CD4-positive, alpha-beta memory T cell (primary cell): ENCODE measurements at regions of chr1 and their contacts with region 1.

Region 1: GRCh38 chr1:85200870-85201339 is at the start of gene SYDE2:
- DNase-seq: peak; percentile 84 to 89 (median 86)
- H3K4me3 ChIP-seq: peak within 1 kb of the TSS; percentile 72 to 73
- H3K4me3 Mint-ChIP-seq: peak within 1 kb of the TSS; percentile 96 to 99 (median 98)
- H3K27ac ChIP-seq: peak within 1 kb of the TSS; percentile 82
- H3K27ac Mint-ChIP-seq: peak within 1 kb of the TSS; percentile 97 to 99 (median 98)
- H3K4me1 ChIP-seq: peaks cover 27% of the 10 kb centered on the region
- H3K4me1 Mint-ChIP-seq: peaks cover 18 to 37% (median 27%) of the 10 kb centered on the region in 4 donors
- H3K27me3 ChIP-seq: no peaks in the 10 kb centered on the region
- H3K27me3 Mint-ChIP-seq: peaks cover 2 to 3% of the 10 kb centered on the region in 2 donors
- total RNA-seq, gene SYDE2: 5.0 to 5.2 TPM

Region 2: DNA sequence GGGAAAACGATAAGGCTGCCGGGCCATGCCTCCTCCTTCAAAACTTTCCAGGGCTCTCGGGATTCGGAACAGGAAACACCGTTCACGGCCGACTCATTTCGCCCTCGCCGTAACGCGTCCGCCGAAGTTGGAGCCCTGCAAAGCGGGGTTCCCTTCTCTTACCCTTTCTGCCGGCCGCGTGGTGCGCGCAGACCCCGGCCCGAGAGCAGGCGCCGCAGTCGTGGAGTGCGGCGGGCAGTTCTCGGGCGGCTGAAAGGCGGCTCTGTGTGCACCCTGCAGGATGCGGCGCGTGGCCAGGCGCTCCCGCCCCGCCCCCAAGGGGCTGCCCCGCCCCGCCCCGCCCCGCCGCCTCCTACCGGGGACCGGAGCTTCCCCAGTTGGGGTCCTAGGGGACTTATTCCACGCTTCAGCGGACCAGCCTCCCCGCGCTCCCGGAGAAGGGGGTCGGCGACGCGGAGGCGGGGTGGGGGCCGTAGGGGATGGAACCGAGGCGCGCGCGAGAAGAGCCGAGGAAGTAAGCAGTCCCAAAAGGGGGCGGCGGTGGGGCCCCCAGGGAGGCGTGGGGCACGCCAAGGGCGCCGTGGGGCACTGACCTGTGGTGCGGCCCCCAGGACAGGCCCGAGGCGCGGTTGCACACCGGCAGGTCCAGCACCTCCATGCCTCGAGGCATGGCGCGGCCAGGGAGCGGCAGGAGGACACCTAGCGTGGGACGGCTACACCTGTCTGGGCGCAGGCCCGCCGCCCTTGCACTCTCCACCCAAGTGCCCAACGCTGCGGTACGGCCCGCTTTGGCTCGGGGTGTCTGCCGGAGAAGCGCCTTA is 203.8 kb before region 1 on chr1 and contains the start of gene MCOLN2:
- CTCF ChIA-PET with region 1: no interaction called
- POLR2A ChIA-PET with region 1: interaction called, 3 read pairs
- intact Hi-C with region 1: loop called (anchors 5 kb)
- DNase-seq: peak; percentile 42 to 58 (median 52)
- H3K4me3 ChIP-seq: peak within 1 kb of the TSS; percentile 82 to 86
- H3K4me3 Mint-ChIP-seq: peak within 1 kb of the TSS; percentile 81 to 98 (median 89)
- H3K27ac ChIP-seq: peak within 1 kb of the TSS; percentile 50
- H3K27ac Mint-ChIP-seq: peak within 1 kb of the TSS; percentile 51 to 88 (median 76)
- H3K4me1 ChIP-seq: peaks cover 56% of the 10 kb centered on the region
- H3K4me1 Mint-ChIP-seq: peaks cover 30 to 67% (median 39%) of the 10 kb centered on the region in 4 donors
- H3K27me3 ChIP-seq: peaks cover 4% of the 10 kb centered on the region
- H3K27me3 Mint-ChIP-seq: peaks cover 3 to 17% of the 10 kb centered on the region in 2 donors
- total RNA-seq, gene MCOLN2: 16.8 to 20.3 TPM

Region 3: DNA sequence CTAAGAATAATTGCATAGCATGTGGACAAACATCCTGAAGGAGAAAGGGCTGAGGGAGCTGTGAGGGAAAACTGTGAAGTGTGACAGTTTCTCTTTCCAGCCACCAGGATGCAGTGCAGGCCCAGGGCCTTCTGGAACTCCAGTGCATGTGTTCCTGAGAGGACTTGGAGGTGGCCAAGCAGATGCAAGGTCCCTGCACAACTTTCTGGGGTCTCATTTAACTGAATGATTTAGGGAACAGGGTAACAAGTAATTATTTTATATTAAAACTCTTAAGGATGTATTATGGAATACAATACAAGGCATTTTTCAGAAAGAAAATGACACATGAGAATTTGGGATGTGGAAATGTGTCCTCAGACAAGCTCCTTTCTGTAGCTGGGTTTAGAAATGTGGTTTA is 91.4 kb before region 1 on chr1:
- CTCF ChIA-PET with region 1: interaction called, 4 read pairs
- POLR2A ChIA-PET with region 1: no interaction called
- intact Hi-C with region 1: loop called (anchors 2 kb)
- DNase-seq: peak in 4 of 5 donors; percentile 33 to 44 (median 41)
- H3K4me3 ChIP-seq: no peak overlapping the region
- H3K4me3 Mint-ChIP-seq: no peak overlapping the region
- H3K27ac ChIP-seq: no peak overlapping the region
- H3K27ac Mint-ChIP-seq: peak overlapping the region in 1 of 7 donors; percentile 59
- H3K4me1 ChIP-seq: no peaks in the 10 kb centered on the region
- H3K4me1 Mint-ChIP-seq: no peaks in the 10 kb centered on the region
- H3K27me3 ChIP-seq: no peaks in the 10 kb centered on the region
- H3K27me3 Mint-ChIP-seq: peaks cover 0 to 2% of the 10 kb centered on the region in 2 donors

Region 4: DNA sequence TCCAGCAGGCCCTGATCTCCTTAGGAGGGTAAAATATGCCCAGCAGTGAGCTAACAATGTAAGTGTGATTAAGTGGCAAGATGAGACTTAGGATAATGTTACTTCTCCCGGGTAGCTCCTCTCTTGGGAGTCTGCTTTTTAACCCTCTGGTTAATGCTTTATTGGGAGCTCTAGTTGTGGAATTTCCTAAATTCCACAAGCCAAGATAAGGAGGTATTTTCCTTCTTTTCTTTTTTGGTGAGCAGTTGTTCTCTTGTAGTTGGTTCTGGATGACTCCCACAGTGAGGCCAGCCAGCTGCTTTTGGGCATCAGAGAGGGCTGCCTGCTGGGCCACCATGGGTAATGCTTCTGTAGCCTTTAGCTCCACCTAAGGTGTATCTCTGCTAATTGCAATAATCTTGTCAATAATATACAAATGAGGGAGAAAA is 39.3 kb after region 1 on chr1:
- CTCF ChIA-PET with region 1: interaction called, 3 read pairs
- POLR2A ChIA-PET with region 1: interaction called, 3 read pairs
- intact Hi-C with region 1: loop called (anchors 1 kb)
- DNase-seq: peak in 3 of 5 donors; percentile 11 to 17 (median 12)
- H3K4me3 ChIP-seq: no peak overlapping the region
- H3K4me3 Mint-ChIP-seq: peak overlapping the region in 1 of 8 donors; percentile 9
- H3K27ac ChIP-seq: no peak overlapping the region
- H3K27ac Mint-ChIP-seq: peak overlapping the region in 3 of 7 donors; percentile 37 to 78 (median 50)
- H3K4me1 ChIP-seq: peaks cover 8% of the 10 kb centered on the region
- H3K4me1 Mint-ChIP-seq: peaks cover 6 to 12% (median 10%) of the 10 kb centered on the region in 4 donors
- H3K27me3 ChIP-seq: no peaks in the 10 kb centered on the region
- H3K27me3 Mint-ChIP-seq: peaks cover 2 to 4% of the 10 kb centered on the region in 2 donors

Region 5: DNA sequence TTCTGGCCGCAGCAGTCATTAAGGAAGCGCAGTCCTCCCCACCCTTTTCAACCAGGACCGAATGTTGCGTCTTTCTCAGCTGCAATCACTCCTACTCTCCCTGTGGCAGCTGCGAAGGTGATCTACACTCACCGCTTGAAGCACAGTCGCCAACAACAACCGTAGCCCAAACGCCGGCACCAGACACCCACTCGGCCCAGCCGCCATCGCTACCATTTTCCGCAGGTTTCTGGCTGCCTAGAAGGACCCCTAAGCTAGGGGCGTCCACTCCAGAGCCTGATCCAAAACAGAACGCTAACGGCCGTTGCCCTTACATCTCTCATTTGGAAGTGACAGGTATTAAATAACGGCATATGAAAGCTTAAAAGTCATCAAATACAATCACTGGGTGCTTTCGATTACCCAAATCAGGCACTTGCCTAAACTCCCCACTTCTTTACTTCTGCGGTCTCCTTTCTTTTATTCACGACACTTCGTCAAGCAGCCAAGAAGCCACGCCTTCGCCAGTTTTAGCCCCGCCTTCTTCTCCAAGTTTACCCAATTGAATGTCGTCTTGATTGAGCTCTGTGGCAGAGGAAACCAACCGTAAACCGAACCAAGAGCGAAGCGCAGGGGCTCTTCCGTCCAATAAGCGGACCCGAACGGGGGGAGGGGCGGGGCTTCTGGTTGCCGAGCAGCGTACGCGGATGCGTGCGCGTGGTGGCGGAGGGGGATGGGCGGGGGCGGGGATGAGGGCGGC is 1713.2 kb after region 1 on chr1 and contains the start of gene SELENOF:
- CTCF ChIA-PET with region 1: no interaction called
- POLR2A ChIA-PET with region 1: interaction called, 3 read pairs
- intact Hi-C with region 1: loop called (anchors 10 kb)
- DNase-seq: peak; percentile 98 to 100 (median 99)
- H3K4me3 ChIP-seq: peak within 1 kb of the TSS; percentile 82 to 91
- H3K4me3 Mint-ChIP-seq: no peak within 1 kb of the TSS
- H3K27ac ChIP-seq: peak within 1 kb of the TSS; percentile 81
- H3K27ac Mint-ChIP-seq: peak within 1 kb of the TSS in 1 of 7 donors; percentile 31
- H3K4me1 ChIP-seq: peaks cover 47% of the 10 kb centered on the region
- H3K4me1 Mint-ChIP-seq: peaks cover 29 to 43% (median 41%) of the 10 kb centered on the region in 4 donors
- H3K27me3 ChIP-seq: no peaks in the 10 kb centered on the region
- H3K27me3 Mint-ChIP-seq: no peaks in the 10 kb centered on the region
- total RNA-seq, gene SELENOF: 151 to 169 TPM